Mammary epithelial cell (primary cell): ENCODE measurements at regions of chr12 and their contacts with region 1.

Region 1: GRCh38 chr12:123150744-123151456 is at the start of gene PITPNM2:
- DNase-seq: peak; percentile 57
- H3K4me3 ChIP-seq: peak within 1 kb of the TSS; percentile 79 to 80 (median 79)
- H3K27ac ChIP-seq: peak within 1 kb of the TSS; percentile 62
- H3K4me1 ChIP-seq: peaks cover 18% of the 10 kb centered on the region
- H3K27me3 ChIP-seq: no peaks in the 10 kb centered on the region
- CTCF ChIP-seq: no peak
- total RNA-seq, gene PITPNM2: 7.5 to 14.9 TPM

Region 2: DNA sequence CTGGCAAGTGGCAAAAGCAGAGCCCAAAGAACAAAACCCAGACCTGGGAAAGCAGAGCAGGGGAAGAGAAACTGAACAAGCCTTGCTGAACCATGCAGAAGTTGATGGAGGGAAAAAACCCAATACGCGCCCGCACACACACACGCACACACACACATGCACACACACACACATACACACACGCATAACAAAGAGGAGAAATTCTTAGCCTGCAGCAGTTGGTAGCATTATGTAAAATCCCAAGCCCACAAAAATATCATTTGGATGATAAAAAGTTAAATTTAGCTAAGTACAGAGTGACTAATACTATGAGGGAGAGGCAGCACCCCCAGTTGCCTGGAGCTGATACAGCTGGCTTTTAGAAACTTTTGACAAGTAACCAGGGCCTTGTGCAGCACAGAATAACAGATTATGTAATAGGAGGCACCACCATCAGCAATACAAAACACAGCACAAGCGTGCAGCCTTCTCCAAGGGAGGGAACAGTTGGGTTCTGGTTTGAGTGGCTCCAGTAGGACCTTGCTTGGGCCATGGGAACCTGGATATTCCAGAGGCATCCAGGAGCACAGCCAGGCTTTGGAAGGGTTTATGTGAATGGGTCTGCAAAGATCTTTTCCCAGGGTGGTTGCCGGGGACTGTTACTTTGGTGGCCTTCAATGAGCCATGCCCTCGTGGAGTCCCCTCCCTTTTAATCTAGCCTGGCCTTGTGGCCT is 35.3 kb before region 1 on chr12:
- CTCF ChIA-PET with region 1: interaction called, 3 read pairs
- dilution Hi-C with region 1: no loop called
- in situ Hi-C with region 1: no loop called
- intact Hi-C with region 1: loop called (anchors 1 kb)
- DNase-seq: peak; percentile 71
- H3K4me3 ChIP-seq: no peak overlapping the region
- H3K27ac ChIP-seq: no peak overlapping the region
- H3K4me1 ChIP-seq: peaks cover 12% of the 10 kb centered on the region
- H3K27me3 ChIP-seq: no peaks in the 10 kb centered on the region
- CTCF ChIP-seq: no peak